ENCODE measurements at regions of chr9 and their contacts with region 1.

Region 1: DNA sequence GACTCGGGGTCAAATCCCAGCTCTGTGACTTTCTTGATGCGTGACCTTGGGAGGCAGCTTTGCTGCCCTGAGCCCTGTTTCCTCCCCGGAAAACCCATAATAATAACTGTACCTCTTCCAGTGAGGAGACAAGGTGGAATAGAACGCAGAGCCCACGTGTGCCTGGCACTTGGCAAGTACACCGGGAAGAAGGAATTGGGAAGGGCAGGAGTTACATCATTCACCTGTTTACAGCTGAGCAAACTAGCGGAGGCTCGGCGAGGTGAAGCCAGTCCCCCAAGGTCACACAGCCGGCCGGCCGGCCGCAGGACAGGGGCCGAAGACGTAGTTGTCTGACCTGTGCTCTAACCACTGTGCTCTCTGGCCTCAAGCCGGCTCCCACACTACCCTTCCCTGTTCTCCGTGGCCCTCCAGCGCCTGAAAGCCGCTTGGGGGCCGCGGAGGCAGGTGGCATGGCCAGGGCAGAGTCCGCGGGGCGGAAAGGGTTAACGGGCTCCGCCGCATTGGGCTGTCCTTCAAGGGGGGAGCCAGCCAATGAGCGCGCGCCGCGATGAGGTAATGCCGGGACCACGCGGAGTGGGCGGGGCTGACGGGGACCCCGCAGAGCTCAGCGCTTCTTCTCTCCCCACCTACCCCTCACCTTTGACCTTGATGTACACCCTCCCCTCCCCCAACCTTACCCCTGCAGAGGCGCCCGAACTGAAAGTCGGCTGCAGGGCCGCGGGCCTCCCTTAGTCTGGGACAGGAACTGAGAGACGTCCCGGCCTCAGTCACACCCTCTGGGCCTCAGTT is 125.2 kb downstream of the C9orf50 start:
- ATAC-seq: peak; percentile 36 to 69 (median 44)
- H3K4me3 ChIP-seq: peak overlapping the region in 2 of 5 donors; percentile 37 to 39
- H3K27ac ChIP-seq: peak overlapping the region; percentile 95 to 99
- H3K4me1 ChIP-seq: peaks cover 71 to 74% of the 10 kb centered on the region in 2 donors

Region 2: GRCh38 chr9:128986671-128987070 is 509.1 kb before region 1 on chr9:
- in situ Hi-C with region 1: no loop called
- ATAC-seq: no peak
- H3K4me3 ChIP-seq: no peak overlapping the region
- H3K27ac ChIP-seq: no peak overlapping the region
- H3K4me1 ChIP-seq: no peaks in the 10 kb centered on the region

Region 3: DNA sequence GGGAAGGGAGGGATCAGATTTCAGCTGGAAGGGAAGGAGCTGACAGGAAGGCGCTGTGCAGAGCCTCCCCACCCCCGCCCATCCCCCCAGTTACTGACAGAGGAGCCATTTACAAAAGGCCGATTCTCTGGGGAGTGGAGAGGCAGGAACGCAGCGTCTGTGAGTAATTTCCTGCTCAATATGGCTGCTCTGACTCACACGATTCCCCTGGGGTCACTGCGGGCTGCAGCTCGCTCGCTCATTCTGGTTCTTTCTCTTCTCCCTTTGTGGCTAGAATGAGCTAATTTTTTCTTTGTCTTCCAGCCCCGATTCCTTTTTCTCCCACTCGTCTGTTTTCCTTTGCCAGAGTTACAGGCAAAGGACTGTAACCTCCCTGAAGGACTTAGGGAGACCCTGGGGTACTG is 355.7 kb before region 1 on chr9:
- in situ Hi-C with region 1: loop called in 1 of 9 experiments (anchors 25 kb)
- ATAC-seq: peak; percentile 58 to 79 (median 72)
- H3K4me3 ChIP-seq: peak overlapping the region in 3 of 5 donors; percentile 6 to 17 (median 9)
- H3K27ac ChIP-seq: peak overlapping the region; percentile 99 to 100
- H3K4me1 ChIP-seq: peaks cover 50 to 53% of the 10 kb centered on the region in 2 donors

Region 4: GRCh38 chr9:129676975-129677841 is 181.5 kb after region 1 on chr9:
- in situ Hi-C with region 1: no loop called
- ATAC-seq: peak; percentile 50 to 97 (median 82)
- H3K4me3 ChIP-seq: no peak overlapping the region
- H3K27ac ChIP-seq: no peak overlapping the region
- H3K4me1 ChIP-seq: peaks cover 0 to 7% of the 10 kb centered on the region in 2 donors